ENCODE measurements at regions of chr1 and their contacts with region 1.

Region 1: GRCh38 chr1:202888531-202889360 is at the start of gene RABIF:
- DNase-seq: peak; percentile 96 to 99
- ATAC-seq: peak; percentile 98 to 99 (median 98)
- H3K4me3 ChIP-seq: peak within 1 kb of the TSS; percentile 96
- H3K27ac ChIP-seq: peak within 1 kb of the TSS; percentile 98
- H3K4me1 ChIP-seq: peaks cover 14% of the 10 kb centered on the region
- H3K27me3 ChIP-seq: no peaks in the 10 kb centered on the region
- CTCF ChIP-seq: no peak
- total RNA-seq, gene RABIF: 3.6 to 7.0 (median 5.8) TPM

Region 2: GRCh38 chr1:202810615-202811295 is 78.0 kb before region 1 on chr1 and contains the start of gene PCAT6:
- intact Hi-C with region 1: loop called (anchors 2 to 5 kb)
- DNase-seq: peak; percentile 94 to 95
- ATAC-seq: peak; percentile 89 to 94 (median 94)
- H3K4me3 ChIP-seq: peak within 1 kb of the TSS; percentile 90
- H3K27ac ChIP-seq: peak within 1 kb of the TSS; percentile 88
- H3K4me1 ChIP-seq: peaks cover 15% of the 10 kb centered on the region
- H3K27me3 ChIP-seq: no peaks in the 10 kb centered on the region
- CTCF ChIP-seq: no peak
- total RNA-seq, gene PCAT6: 0.44 to 4.1 (median 0.66) TPM

Region 3: DNA sequence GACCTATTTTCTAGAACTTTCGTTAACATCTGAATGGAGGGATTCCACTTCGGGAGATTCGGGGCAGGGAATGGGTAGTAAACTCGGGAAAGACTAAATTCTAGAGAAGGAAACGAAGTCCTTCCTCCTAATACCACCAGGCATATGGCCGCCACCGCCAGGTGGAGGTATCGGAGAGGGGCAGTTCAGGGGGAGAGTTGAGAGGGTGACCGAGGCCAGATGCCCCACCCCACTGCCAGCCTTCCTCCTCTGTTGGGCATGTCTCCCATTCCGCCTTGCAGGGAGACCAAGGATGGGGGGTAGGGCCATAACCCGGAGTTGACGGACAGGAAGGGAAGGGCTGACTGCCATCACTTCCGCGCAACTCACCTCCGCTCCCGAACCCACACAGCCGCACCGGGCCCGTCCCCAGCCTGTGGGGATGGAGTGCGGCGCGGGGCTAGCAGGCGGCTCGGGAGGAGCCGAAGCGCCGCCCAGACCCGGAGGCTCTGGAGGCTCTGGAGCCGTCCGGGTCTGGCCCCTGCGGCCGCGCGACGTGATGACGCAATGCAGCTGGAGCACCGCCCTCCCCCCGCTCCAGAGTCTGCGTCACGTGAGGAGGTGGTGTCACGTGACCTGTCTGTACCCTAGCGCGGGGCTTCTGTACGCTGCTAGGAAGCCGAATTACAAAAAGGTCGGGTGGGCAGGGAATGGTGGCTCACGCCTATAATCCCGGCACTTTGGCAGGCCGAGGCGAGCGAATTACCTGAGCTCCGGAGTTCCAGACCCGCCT is 38.2 kb after region 1 on chr1 and contains the start of gene KLHL12:
- intact Hi-C with region 1: loop called in 1 of 2 experiments (anchors 5 kb)
- DNase-seq: peak; percentile 96 to 98
- ATAC-seq: peak; percentile 97 to 99 (median 98)
- H3K4me3 ChIP-seq: peak within 1 kb of the TSS; percentile 84
- H3K27ac ChIP-seq: peak within 1 kb of the TSS; percentile 92
- H3K4me1 ChIP-seq: peaks cover 32% of the 10 kb centered on the region
- H3K27me3 ChIP-seq: no peaks in the 10 kb centered on the region
- CTCF ChIP-seq: peak; percentile 73
- total RNA-seq, gene KLHL12: 14.3 to 19.8 (median 16.1) TPM

Region 4: GRCh38 chr1:202944438-202944921 is 55.7 kb after region 1 on chr1:
- intact Hi-C with region 1: loop called in 1 of 2 experiments (anchors 5 kb)
- DNase-seq: no peak
- ATAC-seq: no peak
- H3K4me3 ChIP-seq: no peak overlapping the region
- H3K27ac ChIP-seq: no peak overlapping the region
- H3K4me1 ChIP-seq: no peaks in the 10 kb centered on the region
- H3K27me3 ChIP-seq: no peaks in the 10 kb centered on the region
- CTCF ChIP-seq: no peak

Region 5: GRCh38 chr1:203084588-203085502 is 196.1 kb after region 1 on chr1:
- intact Hi-C with region 1: no loop called
- DNase-seq: peak; percentile 68 to 87
- ATAC-seq: peak; percentile 58 to 79 (median 70)
- H3K4me3 ChIP-seq: peak overlapping the region; percentile 99
- H3K27ac ChIP-seq: peak overlapping the region; percentile 97
- H3K4me1 ChIP-seq: peaks cover 27% of the 10 kb centered on the region
- H3K27me3 ChIP-seq: no peaks in the 10 kb centered on the region
- CTCF ChIP-seq: peak; percentile 79

Region 6: GRCh38 chr1:203252678-203253077 is 363.9 kb after region 1 on chr1:
- intact Hi-C with region 1: no loop called
- DNase-seq: no peak
- ATAC-seq: peak in 1 of 4 donors; percentile 30
- H3K4me3 ChIP-seq: no peak overlapping the region
- H3K27ac ChIP-seq: no peak overlapping the region
- H3K4me1 ChIP-seq: no peaks in the 10 kb centered on the region
- H3K27me3 ChIP-seq: peaks cover 0 to 18% (median 2%) of the 10 kb centered on the region in 3 donors
- CTCF ChIP-seq: no peak